PC-9 (cell line): ENCODE measurements at regions of chr2 and their contacts with region 1.

Region 1: GRCh38 chr2:117760916-117761315 is 53.6 kb upstream of the DDX18 start:
- DNase-seq: no peak
- H3K4me3 ChIP-seq: no peak overlapping the region
- H3K27ac ChIP-seq: no peak overlapping the region
- H3K4me1 ChIP-seq: no peaks in the 10 kb centered on the region
- H3K27me3 ChIP-seq: no peaks in the 10 kb centered on the region
- CTCF ChIP-seq: no peak

Region 2: GRCh38 chr2:117712684-117713083 is 48.2 kb before region 1 on chr2:
- CTCF ChIA-PET with region 1: interaction called, 19 read pairs
- POLR2A ChIA-PET with region 1: no interaction called
- intact Hi-C with region 1: no loop called
- DNase-seq: no peak
- H3K4me3 ChIP-seq: no peak overlapping the region
- H3K27ac ChIP-seq: no peak overlapping the region
- H3K4me1 ChIP-seq: no peaks in the 10 kb centered on the region
- H3K27me3 ChIP-seq: peaks cover 45% of the 10 kb centered on the region
- CTCF ChIP-seq: no peak